Right cardiac atrium (tissue), 5 donors: ENCODE measurements at regions of chr6 and their contacts with region 1.

Region 1: DNA sequence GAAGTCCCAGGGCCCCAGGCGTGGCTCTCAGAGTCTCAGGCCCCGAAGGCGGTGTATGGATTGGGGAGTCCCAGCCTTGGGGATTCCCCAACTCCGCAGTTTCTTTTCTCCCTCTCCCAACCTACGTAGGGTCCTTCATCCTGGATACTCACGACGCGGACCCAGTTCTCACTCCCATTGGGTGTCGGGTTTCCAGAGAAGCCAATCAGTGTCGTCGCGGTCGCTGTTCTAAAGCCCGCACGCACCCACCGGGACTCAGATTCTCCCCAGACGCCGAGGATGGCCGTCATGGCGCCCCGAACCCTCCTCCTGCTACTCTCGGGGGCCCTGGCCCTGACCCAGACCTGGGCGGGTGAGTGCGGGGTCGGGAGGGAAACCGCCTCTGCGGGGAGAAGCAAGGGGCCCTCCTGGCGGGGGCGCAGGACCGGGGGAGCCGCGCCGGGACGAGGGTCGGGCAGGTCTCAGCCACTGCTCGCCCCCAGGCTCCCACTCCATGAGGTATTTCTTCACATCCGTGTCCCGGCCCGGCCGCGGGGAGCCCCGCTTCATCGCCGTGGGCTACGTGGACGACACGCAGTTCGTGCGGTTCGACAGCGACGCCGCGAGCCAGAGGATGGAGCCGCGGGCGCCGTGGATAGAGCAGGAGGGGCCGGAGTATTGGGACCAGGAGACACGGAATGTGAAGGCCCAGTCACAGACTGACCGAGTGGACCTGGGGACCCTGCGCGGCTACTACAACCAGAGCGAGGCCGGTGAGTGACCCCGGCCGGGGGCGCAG is at the start of gene HLA-A:
- DNase-seq: peak; percentile 92 to 97 (median 96)
- ATAC-seq: peak; percentile 98
- H3K4me3 ChIP-seq: peak within 1 kb of the TSS; percentile 46
- H3K27ac ChIP-seq: peak within 1 kb of the TSS; percentile 91
- H3K4me1 ChIP-seq: no peaks in the 10 kb centered on the region
- H3K27me3 ChIP-seq: no peaks in the 10 kb centered on the region
- total RNA-seq, gene HLA-A: 215 to 449 (median 319) TPM

Region 2: DNA sequence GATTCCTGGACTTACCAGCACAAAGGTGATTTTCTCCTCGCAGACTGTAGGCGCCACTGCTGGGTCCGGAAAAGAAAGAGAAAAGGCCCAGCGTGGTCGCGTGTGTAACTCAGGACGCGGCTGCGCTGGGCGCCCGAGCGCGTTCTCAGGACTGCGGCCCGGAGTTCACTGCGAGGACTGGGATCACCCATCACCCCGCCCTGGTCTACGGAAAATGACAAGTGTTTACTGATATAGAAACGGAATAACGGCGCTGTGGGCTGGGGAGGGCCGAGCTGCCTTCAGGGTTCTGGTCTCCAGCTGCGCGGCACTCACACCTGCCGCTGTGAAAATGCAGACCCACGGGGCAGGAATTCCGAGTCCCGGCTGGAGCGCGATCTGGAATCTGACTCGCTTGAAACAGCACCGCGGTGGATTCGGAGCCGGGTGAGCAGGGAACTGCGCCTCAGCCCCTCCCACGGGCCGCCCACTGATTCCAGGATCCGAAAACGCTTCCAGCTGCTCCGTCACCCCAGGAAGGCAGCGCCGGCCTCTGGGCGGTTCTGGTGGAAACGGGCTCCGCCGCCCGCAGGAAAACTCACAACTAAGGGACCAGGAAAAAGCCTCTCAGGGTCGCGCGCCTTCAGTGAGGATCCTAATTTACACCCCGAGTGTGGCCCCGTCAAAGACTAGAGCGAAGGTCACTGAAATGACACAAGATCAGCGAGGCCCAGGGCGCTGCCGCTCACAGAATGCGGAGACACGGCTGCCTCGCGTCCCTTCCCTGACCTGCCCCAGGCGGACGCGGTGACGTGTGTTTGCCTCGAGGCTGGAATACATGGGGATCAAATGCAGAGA is 34.3 kb after region 1 on chr6:
- intact Hi-C with region 1: loop called in 2 of 4 experiments (anchors 5 kb)
- DNase-seq: peak; percentile 93 to 97 (median 95)
- ATAC-seq: peak; percentile 97
- H3K4me3 ChIP-seq: peak overlapping the region; percentile 44
- H3K27ac ChIP-seq: peak overlapping the region; percentile 90
- H3K4me1 ChIP-seq: peaks cover 4% of the 10 kb centered on the region
- H3K27me3 ChIP-seq: no peaks in the 10 kb centered on the region